Activated CD8-positive, alpha-beta T cell treated with anti-CD3 and anti-CD28 coated beads, Interleukin-2, amount 10 ng/mL, durations not matched to agents 7 days and 5 days (primary cell): ENCODE measurements at regions of chr15 and their contacts with region 1.

Region 1: GRCh38 chr15:52783929-52784798 is 6.0 kb downstream of the ONECUT1 start:
- DNase-seq: peak; percentile 35
- ATAC-seq: no peak
- H3K4me3 Mint-ChIP-seq: no peak overlapping the region
- H3K27ac Mint-ChIP-seq: no peak overlapping the region
- H3K4me1 Mint-ChIP-seq: peaks cover 14% of the 10 kb centered on the region
- H3K27me3 Mint-ChIP-seq: peaks cover 82% of the 10 kb centered on the region

Region 2: DNA sequence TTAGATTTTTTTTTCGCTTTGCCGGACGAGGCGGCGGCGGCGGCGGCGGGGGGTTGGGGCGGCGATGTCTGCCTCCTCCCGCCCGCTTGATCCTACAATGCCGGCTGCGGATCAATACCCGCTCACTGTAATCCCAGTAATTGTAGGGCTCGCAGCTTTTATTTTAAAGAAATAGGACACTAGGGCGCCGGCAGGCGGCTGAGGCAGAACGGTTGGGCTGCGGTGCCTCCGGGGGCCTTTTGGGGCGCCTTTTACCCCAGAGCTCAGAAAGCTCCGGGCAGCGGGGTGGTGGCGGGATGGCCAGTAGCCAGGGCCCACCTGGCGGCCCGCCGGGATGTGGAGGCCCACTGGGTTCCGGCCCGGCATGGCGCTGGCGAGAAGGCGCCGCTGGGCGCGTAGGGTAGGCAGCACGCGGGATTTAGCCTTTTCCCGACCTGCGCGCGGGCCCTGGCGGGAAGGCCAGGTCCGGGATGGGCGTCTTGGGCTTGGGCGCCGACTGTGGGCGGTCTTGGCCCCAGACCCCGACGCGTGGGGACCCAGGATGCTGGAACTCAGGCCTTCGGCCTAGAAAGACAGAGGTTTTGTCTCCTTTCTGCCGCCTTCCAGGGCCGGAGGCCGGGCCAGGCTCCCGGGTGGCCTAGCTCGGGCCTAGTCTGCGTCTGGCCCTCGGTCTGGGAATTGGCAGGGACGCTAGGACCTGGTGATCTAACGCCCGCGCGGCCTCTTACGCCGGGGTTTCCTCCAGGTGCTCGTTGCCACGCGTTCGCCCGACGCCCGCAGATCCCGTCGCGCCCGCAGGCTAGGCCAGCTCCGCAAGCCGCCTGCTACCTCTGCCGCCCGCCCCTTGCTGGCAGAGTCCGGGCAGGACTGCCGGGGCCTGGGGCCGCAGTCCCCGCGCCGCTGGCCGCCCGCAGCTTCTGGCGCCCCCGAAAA is 21.5 kb after region 1 on chr15:
- CTCF ChIA-PET with region 1: interaction called, 11 read pairs
- POLR2A ChIA-PET with region 1: no interaction called
- DNase-seq: no peak
- ATAC-seq: no peak
- H3K4me3 Mint-ChIP-seq: no peak overlapping the region
- H3K27ac Mint-ChIP-seq: no peak overlapping the region
- H3K4me1 Mint-ChIP-seq: peaks cover 15% of the 10 kb centered on the region
- H3K27me3 Mint-ChIP-seq: peaks cover 68% of the 10 kb centered on the region

Region 3: GRCh38 chr15:52819253-52819652 is 35.1 kb after region 1 on chr15:
- CTCF ChIA-PET with region 1: no interaction called
- POLR2A ChIA-PET with region 1: no interaction called
- DNase-seq: no peak
- ATAC-seq: no peak
- H3K4me3 Mint-ChIP-seq: no peak overlapping the region
- H3K27ac Mint-ChIP-seq: no peak overlapping the region
- H3K4me1 Mint-ChIP-seq: no peaks in the 10 kb centered on the region
- H3K27me3 Mint-ChIP-seq: peaks cover 30% of the 10 kb centered on the region

Region 4: GRCh38 chr15:52870015-52870414 is 85.9 kb after region 1 on chr15:
- CTCF ChIA-PET with region 1: no interaction called
- POLR2A ChIA-PET with region 1: no interaction called
- DNase-seq: no peak
- ATAC-seq: no peak
- H3K4me3 Mint-ChIP-seq: no peak overlapping the region
- H3K27ac Mint-ChIP-seq: no peak overlapping the region
- H3K4me1 Mint-ChIP-seq: no peaks in the 10 kb centered on the region
- H3K27me3 Mint-ChIP-seq: peaks cover 5% of the 10 kb centered on the region